Left ventricle myocardium inferior (tissue), 1 donor: ENCODE measurements at regions of chr12 and their contacts with region 1.

Region 1: DNA sequence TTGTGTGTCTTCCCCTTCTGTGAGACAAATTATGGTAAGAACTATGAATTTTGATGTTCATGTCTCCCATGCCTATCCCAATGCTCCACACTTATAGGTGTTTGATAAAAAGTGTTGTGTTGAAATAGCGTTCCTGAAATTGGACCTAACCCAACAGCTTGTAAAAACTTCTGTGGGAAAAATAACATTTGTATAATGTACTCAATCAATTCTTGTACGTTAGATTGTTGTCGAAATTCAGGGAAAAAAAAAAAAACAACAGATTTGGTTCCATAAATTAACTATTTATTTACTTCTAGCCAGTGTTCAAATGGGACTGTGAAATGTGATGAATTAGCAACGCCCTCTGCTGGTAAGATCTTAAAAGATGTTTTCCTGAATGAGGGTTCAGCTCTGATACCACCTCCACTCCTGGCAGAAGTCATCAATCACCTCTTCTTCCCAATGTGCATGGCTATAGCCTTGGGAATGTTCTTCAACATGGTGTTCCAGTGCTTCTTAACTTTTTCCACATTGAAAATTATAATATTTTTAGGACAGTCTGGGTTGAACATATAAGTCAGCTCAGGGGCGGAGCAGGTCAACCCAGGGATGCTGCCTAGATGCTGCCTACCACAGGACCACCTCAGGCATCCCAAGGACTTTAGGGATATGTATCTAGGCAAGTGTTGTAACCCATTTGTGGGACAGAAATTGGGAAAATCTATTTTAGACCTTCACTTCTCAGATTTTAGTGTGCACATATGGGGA is 170.6 kb downstream of the OTOGL start:
- DNase-seq: no peak
- H3K4me3 ChIP-seq: no peak overlapping the region
- H3K27ac ChIP-seq: no peak overlapping the region
- H3K4me1 ChIP-seq: peaks cover 7% of the 10 kb centered on the region
- H3K27me3 ChIP-seq: no peaks in the 10 kb centered on the region
- CTCF ChIP-seq: peak; percentile 77

Region 2: DNA sequence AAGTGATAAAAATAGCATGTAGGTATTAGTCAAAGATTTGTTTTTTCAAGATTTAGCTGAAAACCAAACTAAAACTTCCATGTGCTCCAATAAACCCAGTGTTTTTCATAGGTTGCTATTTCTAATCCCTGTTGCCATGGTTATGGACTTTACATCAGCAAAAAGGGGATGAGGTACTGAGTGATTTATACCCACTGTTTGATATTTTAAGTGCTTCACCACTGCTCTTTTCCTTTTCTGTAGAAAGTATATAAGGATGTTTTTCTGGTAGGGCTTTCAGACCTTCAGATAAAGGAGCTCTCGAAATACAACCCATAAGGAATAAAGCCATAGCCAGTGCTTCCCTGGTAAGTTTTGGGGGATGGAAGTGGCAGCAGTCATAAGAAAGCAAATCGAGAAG is 170.7 kb before region 1 on chr12 and contains the start of gene OTOGL:
- intact Hi-C with region 1: no loop called
- DNase-seq: no peak
- H3K4me3 ChIP-seq: no peak within 1 kb of the TSS
- H3K27ac ChIP-seq: no peak within 1 kb of the TSS
- H3K4me1 ChIP-seq: no peaks in the 10 kb centered on the region
- H3K27me3 ChIP-seq: no peaks in the 10 kb centered on the region
- CTCF ChIP-seq: no peak
- total RNA-seq, gene OTOGL: 0.27 TPM

Region 3: DNA sequence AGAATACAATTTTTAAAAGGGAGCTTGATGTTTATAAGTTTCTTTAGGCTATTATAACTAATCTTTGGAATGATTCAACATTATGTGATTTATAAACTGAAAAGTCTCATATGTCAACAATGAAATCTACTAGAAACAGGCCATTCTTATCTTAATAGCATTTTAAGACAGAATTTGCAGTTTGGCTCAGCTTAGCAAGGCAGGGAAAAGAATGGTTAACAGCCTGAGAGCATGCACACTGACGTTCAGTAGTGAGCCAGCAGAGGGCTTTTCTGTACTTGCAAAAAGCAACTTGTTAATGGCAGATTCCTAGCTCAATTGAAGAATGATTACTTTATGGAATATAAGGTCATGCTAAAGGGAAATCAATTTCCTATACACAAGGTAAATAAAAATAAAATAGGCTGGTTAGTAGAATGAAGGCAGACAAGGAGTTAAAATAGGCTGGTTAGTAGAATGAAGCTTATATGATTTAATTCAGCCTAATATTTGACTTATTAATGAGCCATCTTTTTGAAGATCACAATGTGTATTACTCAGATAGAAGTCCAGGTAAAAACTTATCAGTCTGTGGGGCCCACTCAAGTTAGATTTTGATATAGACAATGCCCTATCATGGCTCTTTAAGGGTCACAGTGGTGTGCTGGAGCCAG is 74.8 kb before region 1 on chr12:
- intact Hi-C with region 1: loop called (anchors 5 kb)
- DNase-seq: no peak
- H3K4me3 ChIP-seq: no peak overlapping the region
- H3K27ac ChIP-seq: no peak overlapping the region
- H3K4me1 ChIP-seq: peaks cover 9% of the 10 kb centered on the region
- H3K27me3 ChIP-seq: no peaks in the 10 kb centered on the region
- CTCF ChIP-seq: peak; percentile 77

Region 4: GRCh38 chr12:80509781-80510556 is 240.0 kb after region 1 on chr12:
- intact Hi-C with region 1: no loop called
- DNase-seq: no peak
- H3K4me3 ChIP-seq: no peak overlapping the region
- H3K27ac ChIP-seq: no peak overlapping the region
- H3K4me1 ChIP-seq: no peaks in the 10 kb centered on the region
- H3K27me3 ChIP-seq: peaks cover 3% of the 10 kb centered on the region
- CTCF ChIP-seq: no peak